Keratinocyte (primary cell): ENCODE measurements at regions of chr9 and their contacts with region 1.

Region 1: DNA sequence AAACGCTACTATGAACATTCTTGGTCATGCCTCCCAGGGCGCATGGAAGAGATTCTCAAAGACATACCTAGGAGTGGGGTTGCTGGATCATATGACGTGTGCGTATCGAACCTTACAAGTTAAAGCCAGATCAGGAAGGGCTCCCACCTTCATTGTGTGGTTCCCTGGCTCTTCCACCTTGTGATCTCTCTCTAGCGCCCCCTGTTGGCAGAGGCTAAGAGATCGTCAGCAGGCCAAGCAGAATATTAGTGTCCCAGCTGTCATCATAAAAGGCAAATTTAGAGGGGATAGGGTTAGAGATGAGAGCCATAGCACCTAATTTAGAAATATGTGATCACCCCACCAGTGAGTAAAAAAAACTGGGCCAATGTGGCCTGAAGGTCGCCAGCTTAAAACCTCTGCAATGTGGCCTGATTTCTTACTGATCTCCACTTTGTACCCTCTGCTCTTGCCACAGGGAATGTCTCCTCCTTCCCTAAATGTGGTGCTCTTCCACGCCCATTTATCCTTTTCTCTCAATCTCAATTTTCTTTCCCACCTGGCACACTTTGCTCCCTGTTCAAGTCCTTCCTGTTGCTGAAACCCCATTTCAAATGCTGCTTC is 91.7 kb upstream of the SHB start:
- DNase-seq: peak; percentile 23
- H3K4me3 ChIP-seq: no peak overlapping the region
- H3K27ac ChIP-seq: no peak overlapping the region
- H3K4me1 ChIP-seq: no peaks in the 10 kb centered on the region
- H3K27me3 ChIP-seq: no peaks in the 10 kb centered on the region
- CTCF ChIP-seq: peak; percentile 80 to 86 (median 84)

Region 2: DNA sequence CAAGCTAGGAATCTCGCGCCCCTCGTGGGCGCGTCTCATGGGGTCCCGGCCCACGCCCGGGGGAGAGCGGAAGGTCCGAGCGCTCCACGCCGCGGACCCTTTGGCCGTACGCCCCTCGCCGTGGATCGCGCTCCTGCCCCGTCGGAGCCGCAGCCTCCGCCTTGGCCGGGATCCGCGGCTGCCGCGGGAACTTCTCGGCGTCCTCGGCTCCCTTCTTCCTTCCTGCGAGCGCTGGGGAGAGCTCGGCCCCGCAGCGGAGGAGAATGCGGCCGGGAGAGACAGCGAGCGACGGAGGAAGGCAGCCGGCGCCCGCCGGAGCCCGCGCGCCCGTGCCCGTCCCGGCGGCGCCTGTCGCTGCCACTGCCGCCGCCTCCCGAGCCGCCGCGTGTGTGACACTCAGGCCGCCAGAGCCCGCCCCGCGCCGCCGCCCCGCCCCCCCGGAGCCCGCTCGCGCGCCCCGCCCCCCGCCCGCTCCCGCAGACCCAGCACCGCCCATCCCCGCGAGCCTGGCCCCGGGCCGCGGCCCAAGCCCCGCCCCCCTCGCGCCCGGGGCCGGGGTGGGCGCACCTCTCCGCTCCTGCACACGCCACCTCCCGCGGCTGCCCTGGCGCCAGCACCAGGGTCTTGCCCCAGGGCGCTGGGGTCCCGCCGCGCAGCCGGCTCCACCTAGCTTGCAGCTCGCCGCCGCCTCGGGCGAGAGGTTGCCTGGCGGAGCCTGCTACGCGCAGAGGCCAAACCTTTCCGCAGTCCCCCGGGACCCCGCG is 91.7 kb before region 1 on chr9 and contains the start of gene SHB:
- dilution Hi-C with region 1: loop called (anchors 25 kb)
- DNase-seq: no peak
- H3K4me3 ChIP-seq: peak within 1 kb of the TSS; percentile 74 to 97 (median 81)
- H3K27ac ChIP-seq: peak within 1 kb of the TSS; percentile 61
- H3K4me1 ChIP-seq: peaks cover 26% of the 10 kb centered on the region
- H3K27me3 ChIP-seq: no peaks in the 10 kb centered on the region
- CTCF ChIP-seq: no peak
- polyA plus RNA-seq, gene SHB: 9.4 to 18.0 TPM (median 10.9 TPM) in 3 replicates

Region 3: GRCh38 chr9:38096238-38096805 is 64.4 kb before region 1 on chr9:
- dilution Hi-C with region 1: no loop called
- DNase-seq: peak; percentile 53
- H3K4me3 ChIP-seq: no peak overlapping the region
- H3K27ac ChIP-seq: no peak overlapping the region
- H3K4me1 ChIP-seq: peaks cover 12% of the 10 kb centered on the region
- H3K27me3 ChIP-seq: no peaks in the 10 kb centered on the region
- CTCF ChIP-seq: no peak

Region 4: GRCh38 chr9:38392235-38393127 is 231.8 kb after region 1 on chr9 and contains the start of gene ALDH1B1:
- dilution Hi-C with region 1: no loop called
- DNase-seq: peak; percentile 30
- H3K4me3 ChIP-seq: peak within 1 kb of the TSS; percentile 77 to 86 (median 78)
- H3K27ac ChIP-seq: peak within 1 kb of the TSS; percentile 32
- H3K4me1 ChIP-seq: peaks cover 3% of the 10 kb centered on the region
- H3K27me3 ChIP-seq: peaks cover 12% of the 10 kb centered on the region
- CTCF ChIP-seq: peak in 1 of 3 experiments; percentile 3
- polyA plus RNA-seq, gene ALDH1B1: 10.9 to 22.0 TPM (median 14.4 TPM) in 3 replicates